ENCODE measurements at regions of chr1 and their contacts with region 1.

Region 1: DNA sequence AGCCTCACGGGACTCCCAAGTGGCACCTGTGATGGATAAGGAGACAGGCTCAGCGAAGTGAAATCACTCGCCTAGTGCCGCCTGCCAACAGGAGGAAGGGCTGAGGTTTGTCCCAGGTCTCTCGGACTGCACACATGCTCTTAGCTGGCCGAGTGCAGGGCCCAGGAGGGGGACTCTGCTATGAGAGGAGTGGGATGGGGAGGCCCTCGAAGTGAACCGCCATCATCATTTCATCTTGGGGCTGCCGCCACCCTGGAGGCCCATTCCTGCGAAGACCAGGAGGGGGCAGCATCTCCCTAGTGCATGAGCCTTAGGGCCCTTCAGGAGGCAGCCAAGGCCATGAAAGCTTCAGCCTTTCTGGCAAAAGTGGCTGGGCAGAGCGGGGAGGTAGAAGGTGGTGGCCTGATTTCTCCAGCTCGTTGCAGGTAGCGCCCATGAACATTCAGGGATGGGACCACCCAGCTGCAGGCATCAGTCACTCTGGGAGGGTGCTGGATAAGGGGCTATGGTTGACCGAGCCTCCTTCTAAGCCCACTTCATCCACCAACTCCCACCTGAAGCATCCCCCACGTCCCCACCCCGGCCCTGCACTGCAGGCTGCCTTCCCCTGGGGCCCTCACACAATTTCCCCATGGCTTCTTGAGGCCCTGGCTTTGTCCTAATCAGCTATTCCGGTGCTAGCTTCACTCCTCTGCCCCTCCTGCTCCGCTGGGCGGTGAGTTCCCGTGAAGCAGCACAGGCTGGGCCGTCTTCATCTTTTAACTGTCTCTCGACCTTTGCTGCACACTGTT is 17.2 kb upstream of the RASSF5 start:
- DNase-seq: peak; percentile 76 to 80
- H3K4me3 ChIP-seq: no peak overlapping the region
- H3K27ac ChIP-seq: no peak overlapping the region
- H3K4me1 ChIP-seq: peaks cover 0 to under 1% of the 10 kb centered on the region in 2 donors
- H3K27me3 ChIP-seq: no peaks in the 10 kb centered on the region
- CTCF ChIP-seq: peak; percentile 92 to 95 (median 94)
- POLR2A ChIP-seq: no peak

Region 2: DNA sequence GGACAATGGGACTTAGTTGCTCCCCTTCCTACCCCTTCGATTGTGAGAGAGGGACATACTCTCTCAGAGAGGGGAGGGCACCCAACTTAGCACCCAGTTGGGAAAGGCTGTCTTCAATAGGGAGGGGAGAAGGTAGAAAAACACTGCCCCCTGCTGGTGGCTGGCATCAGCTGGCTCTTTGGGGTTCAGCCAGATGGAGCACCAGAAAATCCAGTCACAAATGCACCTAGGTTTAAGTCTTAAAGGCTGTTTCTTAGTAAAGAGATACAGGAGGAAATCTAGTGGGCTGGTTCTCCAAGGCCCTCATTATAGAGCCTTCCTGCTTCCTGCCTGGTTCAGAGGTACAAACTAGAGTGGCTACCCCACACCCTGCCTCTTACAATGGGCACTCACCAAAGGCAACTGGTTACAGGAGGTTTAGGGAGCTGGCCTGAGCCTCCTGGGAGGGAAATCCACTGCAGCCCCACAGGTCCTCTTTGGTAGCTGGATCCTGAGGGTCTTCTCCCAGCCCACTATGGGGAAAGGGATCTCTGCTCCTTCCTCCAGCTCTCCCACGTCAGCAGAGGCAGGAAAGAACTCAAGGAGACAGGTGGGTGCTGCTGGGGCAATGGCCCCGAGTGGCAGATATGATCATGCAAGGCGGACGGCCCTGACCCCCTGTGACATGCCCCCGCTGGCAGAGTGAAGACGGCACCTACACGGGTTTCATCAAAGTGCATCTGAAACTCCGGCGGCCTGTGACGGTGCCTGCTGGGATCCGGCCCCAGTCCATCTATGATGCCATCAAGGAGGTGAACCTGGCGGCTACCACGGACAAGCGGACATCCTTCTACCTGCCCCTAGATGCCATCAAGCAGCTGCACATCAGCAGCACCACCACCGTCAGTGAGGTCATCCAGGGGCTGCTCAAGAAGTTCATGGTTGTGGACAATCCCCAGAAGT is 93.8 kb after region 1 on chr1:
- intact Hi-C with region 1: loop called (anchors 10 kb)
- DNase-seq: peak; percentile 69 to 71
- H3K4me3 ChIP-seq: no peak overlapping the region
- H3K27ac ChIP-seq: no peak overlapping the region
- H3K4me1 ChIP-seq: no peaks in the 10 kb centered on the region
- H3K27me3 ChIP-seq: no peaks in the 10 kb centered on the region
- CTCF ChIP-seq: peak; percentile 75 to 82 (median 78)
- POLR2A ChIP-seq: no peak

Region 3: GRCh38 chr1:206663832-206664652 is 173.9 kb after region 1 on chr1:
- intact Hi-C with region 1: loop called (anchors 10 kb)
- DNase-seq: peak; percentile 67 to 77
- H3K4me3 ChIP-seq: no peak overlapping the region
- H3K27ac ChIP-seq: no peak overlapping the region
- H3K4me1 ChIP-seq: peaks cover 0 to 6% of the 10 kb centered on the region in 2 donors
- H3K27me3 ChIP-seq: no peaks in the 10 kb centered on the region
- CTCF ChIP-seq: peak; percentile 86 to 89 (median 88)
- POLR2A ChIP-seq: no peak

Measured in uterus (tissue), 4 donors.